Endothelial cell of umbilical vein (primary cell): ENCODE measurements at regions of chr6 and their contacts with region 1.

Region 1: DNA sequence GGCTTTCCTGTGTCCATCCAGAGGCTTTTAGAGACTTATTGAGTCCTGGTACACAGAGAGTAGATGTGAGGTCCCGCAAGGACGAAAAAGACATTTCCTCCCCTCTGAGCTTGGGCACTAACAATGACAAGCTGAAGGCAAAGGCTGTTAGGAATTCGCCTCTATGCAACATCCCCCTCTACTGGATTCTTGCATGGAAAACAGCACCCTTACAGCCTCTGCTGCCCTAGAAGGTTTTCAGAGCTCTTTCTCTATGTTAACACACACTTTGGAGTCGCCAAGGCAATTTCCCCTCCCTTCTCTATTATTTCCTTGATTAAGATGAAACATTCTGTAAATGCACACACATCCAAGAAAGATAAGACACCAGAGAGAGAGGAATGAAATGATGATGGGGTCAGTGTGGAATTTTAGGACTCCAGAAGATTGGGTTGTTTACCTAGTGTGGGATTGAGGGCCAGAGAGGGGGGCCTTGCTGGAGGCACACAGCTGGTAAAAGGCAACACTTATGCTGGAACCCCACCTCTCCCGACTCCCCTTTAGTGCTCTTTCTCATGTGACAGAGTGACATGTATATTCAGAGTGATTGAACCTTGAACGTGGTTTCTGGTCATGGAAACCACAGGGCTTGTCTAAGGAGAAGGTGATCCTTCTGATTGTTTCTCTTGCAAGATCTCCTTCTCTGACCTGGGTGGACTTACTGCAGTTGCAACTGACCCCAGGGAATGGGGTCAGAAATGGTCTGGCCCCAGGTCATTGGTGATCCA is 300.7 kb downstream of the CLIC5 start:
- DNase-seq: peak; percentile 80
- H3K4me3 ChIP-seq: no peak overlapping the region
- H3K27ac ChIP-seq: no peak overlapping the region
- H3K4me1 ChIP-seq: no peaks in the 10 kb centered on the region
- H3K27me3 ChIP-seq: peaks cover 5 to 11% of the 10 kb centered on the region in 2 experiments
- CTCF ChIP-seq: peak; percentile 74 to 80
- POLR2A ChIP-seq: no peak

Region 2: GRCh38 chr6:44630125-44631028 is 1084.5 kb before region 1 on chr6:
- CTCF ChIA-PET with region 1: interaction called, 22 read pairs
- POLR2A ChIA-PET with region 1: no interaction called
- dilution Hi-C with region 1: no loop called
- intact Hi-C with region 1: loop called (anchors 1 kb)
- DNase-seq: peak; percentile 19
- H3K4me3 ChIP-seq: no peak overlapping the region
- H3K27ac ChIP-seq: no peak overlapping the region
- H3K4me1 ChIP-seq: no peaks in the 10 kb centered on the region
- H3K27me3 ChIP-seq: peaks cover 3 to 4% of the 10 kb centered on the region in 2 experiments
- CTCF ChIP-seq: peak; percentile 13 to 63
- POLR2A ChIP-seq: no peak

Region 3: GRCh38 chr6:44667668-44668390 is 1047.1 kb before region 1 on chr6:
- CTCF ChIA-PET with region 1: interaction called, 25 read pairs
- POLR2A ChIA-PET with region 1: no interaction called
- dilution Hi-C with region 1: no loop called
- intact Hi-C with region 1: no loop called
- DNase-seq: no peak
- H3K4me3 ChIP-seq: no peak overlapping the region
- H3K27ac ChIP-seq: no peak overlapping the region
- H3K4me1 ChIP-seq: no peaks in the 10 kb centered on the region
- H3K27me3 ChIP-seq: peaks cover 3 to 5% of the 10 kb centered on the region in 2 experiments
- CTCF ChIP-seq: peak; percentile 32 to 69
- POLR2A ChIP-seq: no peak

Region 4: GRCh38 chr6:45253453-45253852 is 461.5 kb before region 1 on chr6:
- CTCF ChIA-PET with region 1: interaction called, 3 read pairs
- POLR2A ChIA-PET with region 1: no interaction called
- dilution Hi-C with region 1: no loop called
- intact Hi-C with region 1: loop called (anchors 10 kb)
- DNase-seq: no peak
- H3K4me3 ChIP-seq: no peak overlapping the region
- H3K27ac ChIP-seq: no peak overlapping the region
- H3K4me1 ChIP-seq: no peaks in the 10 kb centered on the region
- H3K27me3 ChIP-seq: no peaks in the 10 kb centered on the region
- CTCF ChIP-seq: no peak
- POLR2A ChIP-seq: no peak

Region 5: GRCh38 chr6:45421709-45422502 is 293.0 kb before region 1 on chr6:
- CTCF ChIA-PET with region 1: interaction called, 50 read pairs
- POLR2A ChIA-PET with region 1: no interaction called
- dilution Hi-C with region 1: no loop called
- intact Hi-C with region 1: loop called (anchors 1 kb)
- DNase-seq: peak; percentile 48
- H3K4me3 ChIP-seq: peak overlapping the region; percentile 24 to 44 (median 34)
- H3K27ac ChIP-seq: no peak overlapping the region
- H3K4me1 ChIP-seq: peaks cover 17% of the 10 kb centered on the region
- H3K27me3 ChIP-seq: peaks cover 63 to 96% of the 10 kb centered on the region in 2 experiments
- CTCF ChIP-seq: peak in 1 of 2 donors; percentile 28
- POLR2A ChIP-seq: no peak

Region 6: DNA sequence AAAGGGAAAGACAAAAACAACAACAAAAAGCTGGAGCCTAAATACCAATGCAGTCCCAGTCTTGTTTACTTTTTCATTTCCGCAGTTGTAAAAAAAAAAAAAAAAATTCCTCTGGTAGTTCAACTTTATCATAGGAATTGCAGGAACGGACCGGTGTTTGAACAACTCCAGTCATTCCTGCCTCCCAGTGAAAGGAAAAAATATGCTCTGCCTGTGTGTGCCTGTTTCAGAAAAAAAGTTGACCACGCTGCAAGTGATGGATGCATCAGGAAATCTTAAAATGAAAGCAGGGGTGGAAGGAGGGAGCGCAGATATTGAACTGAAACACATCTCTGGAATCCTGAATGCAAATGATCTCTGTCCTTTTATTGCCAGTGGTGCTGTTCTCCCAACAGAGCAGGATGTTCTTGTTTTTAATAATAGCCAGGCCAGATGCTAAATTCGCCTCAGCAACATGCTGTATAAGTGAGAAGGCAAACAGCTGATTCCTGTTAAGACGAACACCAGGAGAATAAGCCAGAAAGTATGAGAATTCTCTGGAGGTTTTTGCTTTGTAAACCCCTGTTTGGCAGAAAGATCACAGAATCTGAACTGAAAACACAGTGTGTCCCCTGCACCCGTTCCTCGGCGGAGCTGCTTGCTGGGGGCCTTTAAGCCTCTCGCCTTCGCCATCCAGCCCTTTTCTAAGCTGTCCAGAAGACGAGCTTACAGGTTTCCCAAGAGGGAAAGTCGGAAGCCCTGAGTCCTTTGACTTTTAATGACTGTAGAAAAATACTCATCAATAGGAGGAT is 158.7 kb before region 1 on chr6:
- CTCF ChIA-PET with region 1: interaction called, 3 read pairs
- POLR2A ChIA-PET with region 1: no interaction called
- dilution Hi-C with region 1: no loop called
- intact Hi-C with region 1: loop called (anchors 10 kb)
- DNase-seq: no peak
- H3K4me3 ChIP-seq: no peak overlapping the region
- H3K27ac ChIP-seq: no peak overlapping the region
- H3K4me1 ChIP-seq: no peaks in the 10 kb centered on the region
- H3K27me3 ChIP-seq: peaks cover 11 to 24% of the 10 kb centered on the region in 2 experiments
- CTCF ChIP-seq: no peak
- POLR2A ChIP-seq: no peak

Region 7: GRCh38 chr6:45703041-45703739 is 11.7 kb before region 1 on chr6:
- CTCF ChIA-PET with region 1: interaction called, 27 read pairs
- POLR2A ChIA-PET with region 1: no interaction called
- dilution Hi-C with region 1: no loop called
- intact Hi-C with region 1: no loop called
- DNase-seq: no peak
- H3K4me3 ChIP-seq: no peak overlapping the region
- H3K27ac ChIP-seq: no peak overlapping the region
- H3K4me1 ChIP-seq: no peaks in the 10 kb centered on the region
- H3K27me3 ChIP-seq: peaks cover 5 to 8% of the 10 kb centered on the region in 2 experiments
- CTCF ChIP-seq: no peak
- POLR2A ChIP-seq: no peak

Region 8: GRCh38 chr6:45896783-45897441 is 182.0 kb after region 1 on chr6:
- CTCF ChIA-PET with region 1: no interaction called
- POLR2A ChIA-PET with region 1: no interaction called
- dilution Hi-C with region 1: no loop called
- intact Hi-C with region 1: no loop called
- DNase-seq: no peak
- H3K4me3 ChIP-seq: no peak overlapping the region
- H3K27ac ChIP-seq: no peak overlapping the region
- H3K4me1 ChIP-seq: no peaks in the 10 kb centered on the region
- H3K27me3 ChIP-seq: peaks cover 0 to 2% of the 10 kb centered on the region in 2 experiments
- CTCF ChIP-seq: no peak
- POLR2A ChIP-seq: no peak